ENCODE measurements at regions of chr9 and their contacts with region 1.

Region 1: DNA sequence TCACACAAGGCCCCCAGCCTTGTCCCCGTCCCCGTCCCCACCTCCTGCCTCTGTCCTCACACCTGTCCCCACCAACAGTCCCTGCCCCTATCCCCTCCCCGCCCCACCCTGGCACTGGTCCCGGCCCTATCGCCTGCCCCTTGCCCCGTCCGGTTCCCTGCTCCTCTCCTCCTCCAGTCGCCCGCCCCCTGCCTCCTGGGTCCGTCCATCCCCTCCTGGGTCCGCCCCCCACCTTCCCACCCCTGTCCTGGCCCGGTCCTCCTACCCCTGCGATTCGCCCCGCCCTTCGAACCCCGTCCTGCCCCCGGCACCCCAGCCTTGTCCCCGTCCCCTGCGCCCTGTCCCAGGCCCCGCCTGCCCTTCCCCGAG is 389 bp downstream of the EDF1 start:
- DNase-seq: no peak
- ATAC-seq: no peak
- H3K4me3 Mint-ChIP-seq: peak overlapping the region; percentile 81
- H3K27ac Mint-ChIP-seq: peak overlapping the region; percentile 38
- H3K4me1 Mint-ChIP-seq: peaks cover 16% of the 10 kb centered on the region
- H3K27me3 Mint-ChIP-seq: no peaks in the 10 kb centered on the region

Region 2: DNA sequence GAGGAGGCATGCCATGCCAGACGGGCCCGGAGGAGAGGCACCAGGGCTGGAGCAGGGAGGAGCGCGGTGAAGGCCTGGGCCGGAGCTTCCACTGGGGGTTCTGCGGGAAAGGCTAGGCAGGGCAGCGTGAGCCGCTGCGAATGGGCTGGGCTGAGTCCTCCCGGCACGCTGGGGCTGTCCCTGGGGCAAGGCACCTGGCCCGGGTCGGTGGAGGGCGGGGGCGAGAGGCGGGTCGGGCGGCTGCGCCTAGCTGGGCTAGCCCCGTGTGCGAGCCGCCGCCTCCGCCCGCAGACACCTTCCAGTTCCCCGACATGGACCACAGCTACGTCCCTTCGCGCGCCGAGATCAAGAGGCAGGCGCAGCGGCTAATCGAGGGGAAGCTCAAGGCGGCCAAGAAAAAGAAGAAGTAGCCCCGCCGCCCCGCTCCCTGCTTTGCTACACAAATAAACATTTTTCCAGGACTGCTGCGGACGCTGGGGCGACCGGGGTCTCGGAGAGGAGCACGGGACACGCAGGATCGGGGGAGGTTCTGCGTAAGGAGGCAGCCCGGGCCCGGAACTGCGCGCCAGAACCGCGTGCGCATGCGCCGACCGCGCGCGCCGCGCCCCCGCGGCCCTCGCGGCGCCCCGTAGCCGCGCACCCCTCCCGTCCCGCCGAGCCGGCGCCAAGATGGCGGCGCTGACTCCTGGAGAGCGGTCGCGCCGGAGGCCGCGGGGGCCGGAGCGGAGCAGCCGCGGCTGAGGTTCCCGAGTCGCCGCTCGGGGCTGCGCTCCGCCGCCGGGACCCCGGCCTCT is 58.2 kb before region 1 on chr9 and contains the start of gene RABL6:
- CTCF ChIA-PET with region 1: no interaction called
- POLR2A ChIA-PET with region 1: no interaction called
- intact Hi-C with region 1: loop called in 1 of 2 experiments (anchors 1 kb)
- DNase-seq: peak; percentile 86
- ATAC-seq: peak; percentile 88
- H3K4me3 Mint-ChIP-seq: peak within 1 kb of the TSS; percentile 81
- H3K27ac Mint-ChIP-seq: peak within 1 kb of the TSS; percentile 88
- H3K4me1 Mint-ChIP-seq: peaks cover 33% of the 10 kb centered on the region
- H3K27me3 Mint-ChIP-seq: no peaks in the 10 kb centered on the region
- total RNA-seq, gene RABL6: 66.2 to 71.8 TPM

Region 3: GRCh38 chr9:136902259-136902821 is 36.6 kb after region 1 on chr9:
- CTCF ChIA-PET with region 1: interaction called, 3 read pairs
- POLR2A ChIA-PET with region 1: no interaction called
- intact Hi-C with region 1: loop called in 1 of 2 experiments (anchors 1 kb)
- DNase-seq: peak; percentile 93
- ATAC-seq: peak; percentile 85
- H3K4me3 Mint-ChIP-seq: peak overlapping the region; percentile 62
- H3K27ac Mint-ChIP-seq: peak overlapping the region; percentile 98
- H3K4me1 Mint-ChIP-seq: peaks cover 41% of the 10 kb centered on the region
- H3K27me3 Mint-ChIP-seq: no peaks in the 10 kb centered on the region

Region 4: DNA sequence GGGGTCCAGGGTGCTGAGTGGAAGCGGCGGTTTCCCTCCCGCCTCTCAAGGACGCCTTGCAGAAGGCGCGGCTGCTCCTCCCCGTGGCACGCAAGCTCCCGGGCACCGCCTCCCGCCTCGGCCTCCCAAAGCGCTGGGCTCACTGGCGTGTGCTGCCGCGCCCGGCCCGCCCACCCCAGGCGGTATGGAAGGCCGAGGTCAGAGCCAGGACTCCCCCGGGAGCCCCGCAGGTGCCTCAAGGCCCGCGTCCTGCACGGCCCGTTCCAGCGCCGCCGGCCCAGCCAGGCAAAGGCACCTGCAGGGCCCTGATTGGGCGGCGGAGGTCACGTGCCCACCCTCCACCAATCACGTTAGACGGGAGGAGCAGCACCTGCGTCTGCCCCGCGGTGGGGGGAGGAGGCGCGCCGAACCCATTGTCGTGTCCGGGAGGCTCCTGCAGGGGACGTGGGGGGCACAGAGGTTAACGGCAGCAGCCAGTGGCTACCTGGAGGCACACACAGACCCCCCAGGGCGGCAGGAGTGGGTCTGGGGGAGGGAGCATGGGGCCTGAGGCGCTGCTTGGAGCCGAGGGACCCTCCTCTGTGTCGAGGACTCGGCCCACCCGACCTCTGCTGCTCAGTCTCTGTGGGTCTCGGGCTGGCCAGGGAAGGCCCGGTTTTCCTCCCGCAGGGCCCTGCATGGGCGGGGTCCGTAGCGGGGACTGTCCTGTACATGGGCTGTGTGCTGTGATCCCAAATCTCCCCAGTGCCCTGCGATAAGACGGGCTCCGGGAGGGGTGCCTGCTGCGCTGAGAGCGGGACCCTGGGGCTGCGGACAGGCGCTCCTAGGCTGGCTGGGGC is 84.3 kb after region 1 on chr9:
- CTCF ChIA-PET with region 1: no interaction called
- POLR2A ChIA-PET with region 1: no interaction called
- intact Hi-C with region 1: loop called in 1 of 2 experiments (anchors 1 kb)
- DNase-seq: peak; percentile 98
- ATAC-seq: peak; percentile 98
- H3K4me3 Mint-ChIP-seq: peak overlapping the region; percentile 78
- H3K27ac Mint-ChIP-seq: peak overlapping the region; percentile 78
- H3K4me1 Mint-ChIP-seq: peaks cover 2% of the 10 kb centered on the region
- H3K27me3 Mint-ChIP-seq: no peaks in the 10 kb centered on the region

Measured in activated CD4-positive, alpha-beta T cell treated with anti-CD3 and anti-CD28 coated beads for 36 hours (primary cell).